ENCODE measurements at regions of chr12 and their contacts with region 1.

Region 1: GRCh38 chr12:14577344-14577743 is 9.7 kb upstream of the PLBD1 start:
- DNase-seq: no peak
- ATAC-seq: no peak
- H3K4me3 ChIP-seq: no peak overlapping the region
- H3K27ac ChIP-seq: no peak overlapping the region
- H3K4me1 ChIP-seq: no peaks in the 10 kb centered on the region
- H3K27me3 ChIP-seq: no peaks in the 10 kb centered on the region
- CTCF ChIP-seq: no peak

Region 2: DNA sequence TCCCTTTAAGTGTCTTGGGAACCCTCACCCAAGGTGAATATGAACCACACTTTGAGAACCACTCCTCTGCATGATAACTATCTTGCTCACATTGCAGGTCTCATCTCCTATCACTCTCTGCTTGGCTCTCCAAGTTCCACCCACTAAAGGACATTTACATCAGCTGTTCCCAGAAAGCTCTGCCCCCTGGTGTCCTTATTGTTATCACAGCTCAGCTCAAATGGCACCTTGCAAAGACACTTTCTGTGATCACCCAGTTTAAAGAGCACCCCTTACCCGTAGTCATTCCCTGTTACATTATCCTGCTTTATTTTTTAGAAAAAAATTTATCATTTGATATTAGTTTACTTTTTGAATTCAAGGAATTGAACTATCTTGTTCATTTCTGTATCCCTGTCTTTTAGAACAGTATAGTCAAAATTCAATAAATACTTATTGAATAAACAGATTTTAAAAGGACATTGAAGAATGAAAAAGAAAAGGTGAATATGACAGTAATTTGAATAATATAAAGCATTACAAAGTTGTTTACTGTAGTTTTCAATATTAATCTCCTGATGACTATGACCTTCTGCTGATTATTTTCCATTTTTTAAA is 139.6 kb after region 1 on chr12:
- CTCF ChIA-PET with region 1: no interaction called
- POLR2A ChIA-PET with region 1: no interaction called
- in situ Hi-C with region 1: no loop called
- intact Hi-C with region 1: no loop called
- DNase-seq: no peak
- ATAC-seq: peak; percentile 78; the same call in 1 of the 2 replicates
- H3K4me3 ChIP-seq: no peak overlapping the region
- H3K27ac ChIP-seq: no peak overlapping the region
- H3K4me1 ChIP-seq: no peaks in the 10 kb centered on the region
- H3K27me3 ChIP-seq: no peaks in the 10 kb centered on the region
- CTCF ChIP-seq: peak; percentile 58

Region 3: DNA sequence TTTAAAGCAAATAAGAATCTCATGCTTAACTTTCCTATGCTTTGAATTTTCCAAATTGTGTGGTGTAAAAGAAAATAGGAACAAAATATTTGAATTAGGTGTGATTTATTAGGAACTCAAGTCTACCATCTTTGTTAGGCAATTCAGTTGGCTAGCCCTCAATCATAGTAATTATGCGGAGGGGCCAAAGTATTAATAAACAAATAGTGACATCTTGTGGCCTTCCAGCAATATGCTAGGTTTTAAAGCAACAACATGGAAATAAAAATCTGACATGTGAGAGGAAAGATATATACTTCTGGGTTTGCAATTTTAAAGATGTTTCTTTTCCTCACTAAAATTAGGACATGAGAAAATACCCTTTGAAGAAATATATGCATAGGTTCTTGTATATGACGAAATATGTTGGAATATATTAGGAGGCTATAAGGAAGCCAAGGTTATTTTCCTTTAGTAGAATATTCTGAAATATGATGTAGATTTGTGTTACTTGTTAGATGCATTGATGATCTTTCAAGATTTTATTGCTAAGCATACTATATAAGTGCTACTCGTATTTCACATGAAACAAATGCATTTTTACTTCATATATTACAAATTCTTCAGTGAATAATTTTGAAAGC is 945.3 kb after region 1 on chr12:
- CTCF ChIA-PET with region 1: interaction called, 10 read pairs
- POLR2A ChIA-PET with region 1: no interaction called
- in situ Hi-C with region 1: no loop called
- intact Hi-C with region 1: no loop called
- DNase-seq: no peak
- ATAC-seq: no peak
- H3K4me3 ChIP-seq: no peak overlapping the region
- H3K27ac ChIP-seq: no peak overlapping the region
- H3K4me1 ChIP-seq: no peaks in the 10 kb centered on the region
- H3K27me3 ChIP-seq: no peaks in the 10 kb centered on the region
- CTCF ChIP-seq: peak; percentile 50; the same call in 1 of the 2 replicates